B cell (primary cell): ENCODE measurements at regions of chr10 and their contacts with region 1.

Region 1: GRCh38 chr10:30639946-30640786 is 10.6 kb upstream of the LYZL2 start:
- DNase-seq: peak; percentile 66
- ATAC-seq: no peak
- H3K4me3 ChIP-seq: no peak overlapping the region
- H3K4me3 Mint-ChIP-seq: no peak overlapping the region
- H3K27ac ChIP-seq: no peak overlapping the region
- H3K27ac Mint-ChIP-seq: no peak overlapping the region
- H3K4me1 ChIP-seq: no peaks in the 10 kb centered on the region
- H3K4me1 Mint-ChIP-seq: no peaks in the 10 kb centered on the region
- H3K27me3 ChIP-seq: peaks cover 0 to 12% (median 3%) of the 10 kb centered on the region in 4 experiments
- H3K27me3 Mint-ChIP-seq: peaks cover 43% of the 10 kb centered on the region
- CTCF ChIP-seq: peak; percentile 93

Region 2: DNA sequence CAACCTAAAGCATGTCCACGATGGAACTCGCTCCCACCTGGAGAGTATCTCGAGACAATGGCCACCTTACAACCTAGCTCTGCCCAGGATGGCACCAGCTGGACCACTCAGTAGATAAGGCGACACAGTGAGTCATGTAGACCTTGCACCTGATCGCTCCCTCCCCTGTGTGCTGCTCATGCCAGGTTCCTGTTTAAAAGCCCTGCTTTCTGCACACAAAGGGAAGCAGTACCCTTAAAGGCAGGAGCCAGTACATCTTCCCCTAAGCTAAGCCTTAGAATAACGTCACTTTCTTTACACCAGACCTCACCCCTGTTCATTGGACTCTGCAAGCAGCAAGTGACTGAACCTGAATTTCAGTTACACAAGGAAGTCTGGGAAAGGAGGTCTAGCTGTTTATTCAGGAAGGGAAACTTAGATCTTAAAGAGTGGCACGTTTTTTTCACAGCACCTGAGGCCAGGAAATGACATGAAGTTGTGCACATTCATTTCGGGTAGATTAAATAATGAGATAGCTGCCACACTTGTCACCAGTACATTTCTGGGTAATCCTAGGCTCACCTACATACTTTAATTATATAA is 409.0 kb before region 1 on chr10:
- CTCF ChIA-PET with region 1: no interaction called
- POLR2A ChIA-PET with region 1: no interaction called
- intact Hi-C with region 1: no loop called
- DNase-seq: no peak
- ATAC-seq: no peak
- H3K4me3 ChIP-seq: no peak overlapping the region
- H3K4me3 Mint-ChIP-seq: no peak overlapping the region
- H3K27ac ChIP-seq: no peak overlapping the region
- H3K27ac Mint-ChIP-seq: no peak overlapping the region
- H3K4me1 ChIP-seq: no peaks in the 10 kb centered on the region
- H3K4me1 Mint-ChIP-seq: no peaks in the 10 kb centered on the region
- H3K27me3 ChIP-seq: peaks cover 0 to 5% (median 0%) of the 10 kb centered on the region in 4 experiments
- H3K27me3 Mint-ChIP-seq: peaks cover 9% of the 10 kb centered on the region
- CTCF ChIP-seq: no peak

Region 3: DNA sequence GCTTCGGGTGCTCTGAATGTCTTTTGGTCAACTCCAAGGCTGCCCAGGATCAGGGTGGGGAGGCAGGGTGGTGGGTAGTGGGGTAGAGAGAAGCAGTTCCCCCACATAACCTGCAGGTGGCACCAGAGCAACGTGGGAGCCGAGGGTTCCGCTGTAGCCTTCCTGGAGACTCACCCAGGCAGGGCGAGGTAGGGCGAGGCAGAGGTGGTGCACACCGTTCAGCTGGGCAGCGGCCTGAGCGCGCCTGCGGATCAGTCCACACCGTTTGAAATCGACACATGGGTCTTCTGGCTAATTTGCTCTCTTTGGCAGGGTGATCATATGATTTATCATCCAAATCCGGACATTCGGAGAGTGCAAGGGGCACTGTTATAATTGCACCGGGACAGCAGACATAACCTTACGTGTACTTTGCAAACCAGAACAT is 247.6 kb before region 1 on chr10:
- CTCF ChIA-PET with region 1: interaction called, 17 read pairs
- POLR2A ChIA-PET with region 1: no interaction called
- intact Hi-C with region 1: loop called (anchors 5 kb)
- DNase-seq: peak; percentile 82
- ATAC-seq: peak; percentile 100
- H3K4me3 ChIP-seq: no peak overlapping the region
- H3K4me3 Mint-ChIP-seq: no peak overlapping the region
- H3K27ac ChIP-seq: no peak overlapping the region
- H3K27ac Mint-ChIP-seq: no peak overlapping the region
- H3K4me1 ChIP-seq: peaks cover 4 to 5% of the 10 kb centered on the region in 2 donors
- H3K4me1 Mint-ChIP-seq: peaks cover 3% of the 10 kb centered on the region
- H3K27me3 ChIP-seq: no peaks in the 10 kb centered on the region
- H3K27me3 Mint-ChIP-seq: peaks cover 15% of the 10 kb centered on the region
- CTCF ChIP-seq: peak; percentile 97